MCF 10A (cell line): ENCODE measurements at regions of chr4 and their contacts with region 1.

Region 1: DNA sequence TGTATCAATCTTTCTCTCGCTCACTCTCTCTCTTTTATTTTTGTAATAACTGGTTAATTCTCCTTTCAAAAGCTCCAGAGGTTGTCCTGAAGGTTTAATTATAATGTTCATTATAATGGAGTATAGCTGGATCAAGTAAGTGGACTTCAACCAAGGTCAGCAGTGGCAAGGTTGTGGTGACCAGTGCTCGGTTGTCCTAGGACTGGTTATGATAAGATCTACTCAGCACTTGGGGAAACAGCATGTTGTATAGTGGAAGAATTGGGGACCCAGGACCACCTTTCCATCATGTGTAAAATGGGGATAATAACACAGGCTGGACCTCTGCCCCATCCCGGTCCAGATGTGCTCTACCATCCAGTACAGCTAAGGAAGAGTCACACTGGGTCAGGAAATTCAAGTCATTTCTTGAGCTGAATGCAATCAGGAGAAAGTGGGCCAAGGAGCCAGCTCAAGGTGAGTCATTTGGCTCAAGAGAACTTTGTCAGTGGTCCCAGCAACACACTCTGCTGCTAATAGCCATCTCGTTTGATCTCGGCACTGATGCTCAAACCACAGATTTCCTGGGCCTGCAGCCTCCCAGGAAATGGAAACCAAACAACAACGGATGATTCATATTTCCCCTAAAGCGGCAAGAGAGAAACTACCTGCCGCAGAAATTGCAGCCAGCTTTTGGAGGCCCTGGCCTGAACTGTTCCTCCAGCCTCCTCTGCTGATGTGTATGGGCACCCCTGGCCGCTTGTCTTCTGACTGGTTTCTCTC is 123.6 kb upstream of the RBPJ start:
- DNase-seq: peak; percentile 99
- H3K4me3 Mint-ChIP-seq: no peak overlapping the region
- H3K27ac Mint-ChIP-seq: peak overlapping the region; percentile 71
- H3K4me1 Mint-ChIP-seq: peaks cover 8% of the 10 kb centered on the region
- H3K27me3 Mint-ChIP-seq: peaks cover 18% of the 10 kb centered on the region
- CTCF ChIP-seq: no peak

Region 2: GRCh38 chr4:26220698-26221097 is 23.5 kb after region 1 on chr4:
- CTCF ChIA-PET with region 1: interaction called, 4 read pairs
- POLR2A ChIA-PET with region 1: interaction called, 3 read pairs
- intact Hi-C with region 1: loop called (anchors 1 kb)
- DNase-seq: peak; percentile 63
- H3K4me3 Mint-ChIP-seq: no peak overlapping the region
- H3K27ac Mint-ChIP-seq: no peak overlapping the region
- H3K4me1 Mint-ChIP-seq: peaks cover 27% of the 10 kb centered on the region
- H3K27me3 Mint-ChIP-seq: no peaks in the 10 kb centered on the region
- CTCF ChIP-seq: no peak

Region 3: DNA sequence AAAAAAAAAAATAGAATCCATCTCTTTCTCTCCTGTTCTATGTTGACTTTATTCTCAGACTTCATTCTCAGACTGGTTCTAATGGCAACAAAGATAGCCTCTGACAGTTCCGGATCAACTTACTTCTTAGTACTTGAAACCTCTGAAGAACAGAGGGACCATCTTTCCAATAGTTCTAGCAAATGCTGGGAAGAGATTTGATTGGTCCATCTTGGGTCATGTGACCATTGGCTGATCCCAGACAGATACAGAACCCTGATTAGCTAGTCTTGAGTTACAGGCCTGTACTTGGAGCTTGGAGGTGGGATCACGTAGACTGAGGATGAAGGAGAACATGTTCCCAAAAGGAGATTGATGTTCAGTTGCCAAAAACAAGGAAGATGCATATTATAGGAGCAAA is 596.5 kb after region 1 on chr4:
- CTCF ChIA-PET with region 1: no interaction called
- POLR2A ChIA-PET with region 1: no interaction called
- intact Hi-C with region 1: no loop called
- DNase-seq: no peak
- H3K4me3 Mint-ChIP-seq: no peak overlapping the region
- H3K27ac Mint-ChIP-seq: no peak overlapping the region
- H3K4me1 Mint-ChIP-seq: no peaks in the 10 kb centered on the region
- H3K27me3 Mint-ChIP-seq: no peaks in the 10 kb centered on the region
- CTCF ChIP-seq: no peak